Activated CD8-positive, alpha-beta T cell treated with anti-CD3 and anti-CD28 coated beads, Interleukin-2, amount 10 ng/mL, durations not matched to agents 7 days and 5 days (primary cell): ENCODE measurements at regions of chr15 and their contacts with region 1.

Region 1: DNA sequence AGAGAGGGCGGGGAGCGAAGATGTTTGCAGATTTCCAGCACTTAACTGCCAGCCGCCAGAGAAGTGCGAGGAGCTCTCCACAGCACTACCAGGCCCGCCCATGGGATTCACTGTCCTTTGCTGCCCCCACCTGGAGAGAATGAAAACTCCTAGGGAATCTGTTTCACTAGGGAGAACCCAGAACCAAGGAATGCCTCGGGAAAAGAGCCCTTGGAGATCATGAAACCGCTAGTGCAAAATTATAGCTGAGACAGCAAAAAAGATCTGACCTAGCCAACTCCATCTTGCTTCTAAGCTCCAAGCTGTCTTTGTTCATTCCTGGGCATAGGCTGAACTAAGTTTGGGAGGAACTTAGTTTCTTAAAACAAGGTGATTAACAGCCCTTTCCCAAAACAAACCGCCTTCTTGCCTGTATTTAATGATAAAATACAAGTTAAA is 82.6 kb upstream of the GCNT3 start:
- DNase-seq: peak; percentile 83
- ATAC-seq: peak; percentile 80
- H3K4me3 Mint-ChIP-seq: no peak overlapping the region
- H3K27ac Mint-ChIP-seq: no peak overlapping the region
- H3K4me1 Mint-ChIP-seq: peaks cover 16% of the 10 kb centered on the region
- H3K27me3 Mint-ChIP-seq: peaks cover 12% of the 10 kb centered on the region

Region 2: GRCh38 chr15:58957101-58957973 is 571.6 kb before region 1 on chr15:
- CTCF ChIA-PET with region 1: interaction called, 16 read pairs
- POLR2A ChIA-PET with region 1: no interaction called
- DNase-seq: peak; percentile 81
- ATAC-seq: peak; percentile 93
- H3K4me3 Mint-ChIP-seq: no peak overlapping the region
- H3K27ac Mint-ChIP-seq: no peak overlapping the region
- H3K4me1 Mint-ChIP-seq: peaks cover 13% of the 10 kb centered on the region
- H3K27me3 Mint-ChIP-seq: peaks cover 3% of the 10 kb centered on the region

Region 3: DNA sequence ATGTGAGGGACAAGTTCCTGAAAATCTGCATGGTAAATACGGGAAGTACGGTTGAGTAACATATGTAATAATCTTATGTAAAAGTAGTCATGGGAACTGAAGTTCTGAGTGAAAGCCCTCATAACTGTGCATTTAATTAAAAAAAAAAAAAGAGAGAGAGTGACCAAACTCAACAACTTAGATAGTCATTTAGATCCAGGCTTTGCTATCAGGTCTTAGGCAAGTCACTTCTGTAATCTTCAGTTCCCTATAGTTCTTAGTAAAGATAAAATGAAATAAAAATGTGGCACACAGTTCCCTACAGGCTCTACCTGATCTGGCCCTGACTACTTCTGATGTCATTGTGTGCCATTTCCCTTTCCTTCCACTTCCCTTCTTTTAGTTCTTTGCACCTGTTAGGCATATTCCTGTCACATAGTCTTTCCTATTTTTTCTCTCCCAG is 526.5 kb before region 1 on chr15:
- CTCF ChIA-PET with region 1: no interaction called
- POLR2A ChIA-PET with region 1: no interaction called
- DNase-seq: no peak
- ATAC-seq: no peak
- H3K4me3 Mint-ChIP-seq: no peak overlapping the region
- H3K27ac Mint-ChIP-seq: no peak overlapping the region
- H3K4me1 Mint-ChIP-seq: peaks cover 29% of the 10 kb centered on the region
- H3K27me3 Mint-ChIP-seq: no peaks in the 10 kb centered on the region

Region 4: DNA sequence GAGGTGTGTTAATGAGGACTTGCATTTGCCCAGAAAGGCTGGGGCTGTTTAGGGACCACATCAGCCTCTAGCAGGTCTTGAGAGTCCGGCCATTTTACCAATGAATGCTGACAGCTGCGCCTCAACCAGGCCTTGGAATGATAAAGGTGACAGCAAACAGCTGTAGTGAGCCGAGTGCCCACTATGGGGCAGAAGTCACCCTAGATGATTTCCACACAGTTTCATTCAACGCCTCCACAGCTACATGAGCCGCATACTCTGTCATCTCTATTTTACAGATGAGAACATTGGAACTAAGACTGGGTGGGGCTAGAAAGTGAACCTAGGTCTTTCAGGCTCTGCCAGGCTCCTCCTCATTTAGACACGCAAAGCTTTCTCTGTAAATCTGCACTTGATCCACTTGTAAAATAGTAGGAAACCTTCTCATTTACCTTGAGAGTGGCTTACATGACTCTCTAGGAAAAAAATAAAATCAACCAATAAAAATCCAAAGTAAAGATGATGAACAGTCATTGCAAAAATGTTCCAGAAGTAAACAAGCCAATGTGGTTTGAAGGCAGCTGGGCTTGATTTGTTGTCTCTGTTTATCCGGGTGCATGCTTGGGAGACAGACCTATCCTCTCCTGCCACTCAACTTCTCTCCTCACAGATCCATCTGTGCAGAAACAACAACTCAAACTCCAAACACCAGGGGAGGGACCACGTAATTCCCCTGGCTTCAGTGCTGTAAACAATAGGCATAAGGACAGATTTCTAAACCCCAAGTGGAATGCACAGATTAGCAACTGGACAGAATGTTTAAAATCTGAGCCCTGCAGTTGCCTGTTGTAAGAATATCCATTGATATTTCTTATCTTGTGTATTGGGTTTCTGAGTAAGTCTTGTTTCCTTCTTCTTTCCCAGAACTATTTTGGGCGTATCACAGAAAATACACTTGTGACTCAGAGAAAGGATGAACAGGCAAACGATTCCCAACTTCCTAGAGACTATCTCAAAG is 353.9 kb before region 1 on chr15:
- CTCF ChIA-PET with region 1: interaction called, 10 read pairs
- POLR2A ChIA-PET with region 1: no interaction called
- DNase-seq: peak; percentile 43
- ATAC-seq: no peak
- H3K4me3 Mint-ChIP-seq: no peak overlapping the region
- H3K27ac Mint-ChIP-seq: no peak overlapping the region
- H3K4me1 Mint-ChIP-seq: peaks cover 11% of the 10 kb centered on the region
- H3K27me3 Mint-ChIP-seq: peaks cover 2% of the 10 kb centered on the region

Region 5: DNA sequence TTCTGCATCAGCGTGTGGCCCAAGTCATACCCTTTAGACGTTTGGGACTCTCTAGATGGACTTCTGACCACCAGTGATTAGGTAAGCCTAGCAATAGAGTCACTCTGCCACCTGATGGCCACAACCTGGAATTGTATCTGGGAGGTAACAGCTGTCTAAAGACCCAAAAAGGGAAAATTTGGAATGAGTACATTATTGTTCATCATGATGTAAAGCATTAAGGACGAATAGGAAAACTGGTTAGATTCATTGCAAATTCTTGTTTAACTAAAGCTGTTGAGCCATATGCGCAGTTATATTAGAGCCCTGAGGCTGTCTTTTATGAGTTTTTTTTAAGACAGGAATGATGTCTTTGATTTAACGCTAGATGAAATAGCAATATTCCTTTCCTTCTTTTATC is 27.4 kb before region 1 on chr15:
- CTCF ChIA-PET with region 1: interaction called, 17 read pairs
- POLR2A ChIA-PET with region 1: no interaction called
- DNase-seq: peak; percentile 26
- ATAC-seq: no peak
- H3K4me3 Mint-ChIP-seq: no peak overlapping the region
- H3K27ac Mint-ChIP-seq: no peak overlapping the region
- H3K4me1 Mint-ChIP-seq: no peaks in the 10 kb centered on the region
- H3K27me3 Mint-ChIP-seq: peaks cover 20% of the 10 kb centered on the region

Region 6: GRCh38 chr15:59543721-59544547 is 14.9 kb after region 1 on chr15:
- CTCF ChIA-PET with region 1: interaction called, 12 read pairs
- POLR2A ChIA-PET with region 1: no interaction called
- DNase-seq: no peak
- ATAC-seq: peak; percentile 61
- H3K4me3 Mint-ChIP-seq: no peak overlapping the region
- H3K27ac Mint-ChIP-seq: peak overlapping the region; percentile 41
- H3K4me1 Mint-ChIP-seq: peaks cover 14% of the 10 kb centered on the region
- H3K27me3 Mint-ChIP-seq: peaks cover 10% of the 10 kb centered on the region

Region 7: GRCh38 chr15:59622289-59622688 is 93.3 kb after region 1 on chr15:
- CTCF ChIA-PET with region 1: interaction called, 14 read pairs
- POLR2A ChIA-PET with region 1: no interaction called
- DNase-seq: peak; percentile 64
- ATAC-seq: peak; percentile 86
- H3K4me3 Mint-ChIP-seq: no peak overlapping the region
- H3K27ac Mint-ChIP-seq: no peak overlapping the region
- H3K4me1 Mint-ChIP-seq: no peaks in the 10 kb centered on the region
- H3K27me3 Mint-ChIP-seq: peaks cover 20% of the 10 kb centered on the region

Region 8: GRCh38 chr15:59688841-59689625 is 160.0 kb after region 1 on chr15 and contains the start of gene BNIP2:
- CTCF ChIA-PET with region 1: interaction called, 11 read pairs
- POLR2A ChIA-PET with region 1: no interaction called
- DNase-seq: peak; percentile 100
- ATAC-seq: peak; percentile 94
- H3K4me3 Mint-ChIP-seq: peak within 1 kb of the TSS; percentile 88
- H3K27ac Mint-ChIP-seq: peak within 1 kb of the TSS; percentile 96
- H3K4me1 Mint-ChIP-seq: peaks cover 40% of the 10 kb centered on the region
- H3K27me3 Mint-ChIP-seq: no peaks in the 10 kb centered on the region
- total RNA-seq, gene BNIP2: 69.0 to 74.8 TPM